ENCODE measurements at regions of chr6 and their contacts with region 1.

Region 1: DNA sequence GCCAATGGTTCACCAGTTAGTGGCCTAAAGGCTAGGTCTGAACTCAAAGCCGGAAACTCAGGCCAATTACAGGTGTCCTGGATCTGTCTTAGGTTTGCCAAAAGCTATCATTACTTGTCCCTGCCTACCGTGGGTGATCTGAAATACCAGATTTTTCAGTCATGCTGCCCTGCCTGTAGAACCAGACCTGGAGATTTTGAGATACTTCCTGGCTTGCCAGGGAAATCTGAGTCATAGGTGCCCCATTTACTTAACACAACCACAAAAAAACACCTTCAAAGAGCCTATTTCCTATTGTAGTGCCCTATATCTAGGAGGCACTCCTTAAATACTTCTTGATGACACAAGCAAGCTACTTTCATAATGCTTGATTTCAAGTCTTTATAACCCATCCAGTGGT is 13.9 kb upstream of the RANBP9 start:
- DNase-seq: peak in 6 of 9 experiments; percentile 19 to 60 (median 51)
- ATAC-seq: peak; percentile 76
- H3K4me3 ChIP-seq: no peak overlapping the region
- H3K4me3 Mint-ChIP-seq: peak overlapping the region; percentile 44
- H3K27ac ChIP-seq: no peak overlapping the region
- H3K27ac Mint-ChIP-seq: peak overlapping the region; percentile 87
- H3K4me1 ChIP-seq: peaks cover 9% of the 10 kb centered on the region
- H3K4me1 Mint-ChIP-seq: peaks cover 25% of the 10 kb centered on the region
- H3K27me3 ChIP-seq: no peaks in the 10 kb centered on the region
- H3K27me3 Mint-ChIP-seq: no peaks in the 10 kb centered on the region
- CTCF ChIP-seq: no peak

Region 2: GRCh38 chr6:13767121-13767808 is 41.7 kb after region 1 on chr6:
- CTCF ChIA-PET with region 1: interaction called, 5 read pairs
- POLR2A ChIA-PET with region 1: no interaction called
- intact Hi-C with region 1: loop called in 1 of 2 experiments (anchors 5 kb)
- DNase-seq: peak; percentile 11 to 77 (median 53)
- ATAC-seq: peak; percentile 83
- H3K4me3 ChIP-seq: peak overlapping the region; percentile 16 to 21
- H3K4me3 Mint-ChIP-seq: peak overlapping the region; percentile 73
- H3K27ac ChIP-seq: no peak overlapping the region
- H3K27ac Mint-ChIP-seq: no peak overlapping the region
- H3K4me1 ChIP-seq: peaks cover 18% of the 10 kb centered on the region
- H3K4me1 Mint-ChIP-seq: peaks cover 33% of the 10 kb centered on the region
- H3K27me3 ChIP-seq: no peaks in the 10 kb centered on the region
- H3K27me3 Mint-ChIP-seq: no peaks in the 10 kb centered on the region
- CTCF ChIP-seq: peak; percentile 10